Heart left ventricle (tissue), 16 donors: ENCODE measurements at regions of chr9 and their contacts with region 1.

Region 1: GRCh38 chr9:131960871-131961495 is 118.7 kb downstream of the MED27 start:
- DNase-seq: no peak
- ATAC-seq: no peak
- H3K4me3 ChIP-seq: no peak overlapping the region
- H3K27ac ChIP-seq: no peak overlapping the region
- H3K4me1 ChIP-seq: peaks cover 0 to 13% (median 3%) of the 10 kb centered on the region in 12 donors
- H3K27me3 ChIP-seq: no peaks in the 10 kb centered on the region
- CTCF ChIP-seq: no peak
- POLR2A ChIP-seq: no peak

Region 2: GRCh38 chr9:131839281-131840084 is 121.5 kb before region 1 on chr9:
- intact Hi-C with region 1: loop called in 1 of 10 experiments (anchors 10 kb)
- DNase-seq: peak in 3 of 5 donors; percentile 25 to 51 (median 43)
- ATAC-seq: peak; percentile 25 to 75 (median 66)
- H3K4me3 ChIP-seq: no peak overlapping the region
- H3K27ac ChIP-seq: peak overlapping the region in 4 of 12 donors; percentile 37 to 52 (median 40)
- H3K4me1 ChIP-seq: no peaks in the 10 kb centered on the region
- H3K27me3 ChIP-seq: peaks cover 0 to 19% (median 0%) of the 10 kb centered on the region in 9 donors
- CTCF ChIP-seq: no peak
- POLR2A ChIP-seq: no peak

Region 3: GRCh38 chr9:132181796-132182313 is 220.9 kb after region 1 on chr9:
- intact Hi-C with region 1: no loop called
- DNase-seq: peak in 4 of 5 donors; percentile 43 to 85 (median 72)
- ATAC-seq: peak; percentile 92 to 93 (median 92)
- H3K4me3 ChIP-seq: no peak overlapping the region
- H3K27ac ChIP-seq: peak overlapping the region in 9 of 12 donors; percentile 16 to 79 (median 67)
- H3K4me1 ChIP-seq: peaks cover 0 to 16% (median 6%) of the 10 kb centered on the region in 12 donors
- H3K27me3 ChIP-seq: peaks cover 0 to 3% (median 0%) of the 10 kb centered on the region in 9 donors
- CTCF ChIP-seq: no peak
- POLR2A ChIP-seq: no peak